ENCODE measurements at regions of chr18 and their contacts with region 1.

Region 1: DNA sequence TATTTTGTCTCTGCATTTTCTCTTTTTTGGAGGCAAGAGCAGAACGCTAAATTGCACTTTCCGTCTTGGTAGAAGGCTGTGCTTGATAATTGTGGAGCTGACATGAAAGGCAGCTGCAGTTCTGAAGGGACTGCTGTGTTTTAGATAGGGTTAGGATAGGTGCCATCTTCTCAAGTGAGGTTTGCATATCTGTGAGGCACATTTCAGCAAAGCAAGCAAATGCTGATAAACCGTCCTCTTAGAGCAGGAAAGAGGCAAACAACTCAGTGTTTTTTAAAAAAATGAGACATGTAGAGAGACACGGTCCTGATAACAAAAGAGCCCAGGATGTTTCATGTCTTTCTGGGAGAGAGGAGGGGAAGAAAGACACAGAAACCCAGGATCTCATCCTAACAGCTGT is 217.7 kb downstream of the SOCS6 start:
- DNase-seq: no peak
- ATAC-seq: no peak
- H3K4me3 ChIP-seq: no peak overlapping the region
- H3K27ac ChIP-seq: no peak overlapping the region
- H3K4me1 ChIP-seq: no peaks in the 10 kb centered on the region
- H3K27me3 ChIP-seq: peaks cover 0 to 15% (median 0%) of the 10 kb centered on the region in 9 donors
- CTCF ChIP-seq: no peak
- POLR2A ChIP-seq: no peak

Region 2: GRCh38 chr18:70554854-70555445 is 48.4 kb after region 1 on chr18:
- intact Hi-C with region 1: loop called in 1 of 10 experiments (anchors 10 kb)
- DNase-seq: no peak
- ATAC-seq: no peak
- H3K4me3 ChIP-seq: no peak overlapping the region
- H3K27ac ChIP-seq: no peak overlapping the region
- H3K4me1 ChIP-seq: no peaks in the 10 kb centered on the region
- H3K27me3 ChIP-seq: no peaks in the 10 kb centered on the region
- CTCF ChIP-seq: no peak
- POLR2A ChIP-seq: no peak